ENCODE measurements at regions of chr15 and their contacts with region 1.

Region 1: GRCh38 chr15:75453703-75454470 is 2.4 kb upstream of the SIN3A start:
- DNase-seq: peak; percentile 95 to 100
- H3K4me3 ChIP-seq: peak overlapping the region; percentile 85 to 93 (median 92)
- H3K27ac ChIP-seq: peak overlapping the region; percentile 92
- H3K4me1 ChIP-seq: peaks cover 0 to 8% (median 3%) of the 10 kb centered on the region in 4 experiments; a peak in 2 of 7 replicates
- H3K27me3 ChIP-seq: no peaks in the 10 kb centered on the region
- CTCF ChIP-seq: no peak
- EP300 ChIP-seq: peak in 1 of 2 experiments; percentile 30; a peak in 2 of 3 replicates
- POLR2A ChIP-seq: peak; percentile 45 to 57; a peak in 2 of 3 replicates
- RAD21 ChIP-seq: no peak

Region 2: DNA sequence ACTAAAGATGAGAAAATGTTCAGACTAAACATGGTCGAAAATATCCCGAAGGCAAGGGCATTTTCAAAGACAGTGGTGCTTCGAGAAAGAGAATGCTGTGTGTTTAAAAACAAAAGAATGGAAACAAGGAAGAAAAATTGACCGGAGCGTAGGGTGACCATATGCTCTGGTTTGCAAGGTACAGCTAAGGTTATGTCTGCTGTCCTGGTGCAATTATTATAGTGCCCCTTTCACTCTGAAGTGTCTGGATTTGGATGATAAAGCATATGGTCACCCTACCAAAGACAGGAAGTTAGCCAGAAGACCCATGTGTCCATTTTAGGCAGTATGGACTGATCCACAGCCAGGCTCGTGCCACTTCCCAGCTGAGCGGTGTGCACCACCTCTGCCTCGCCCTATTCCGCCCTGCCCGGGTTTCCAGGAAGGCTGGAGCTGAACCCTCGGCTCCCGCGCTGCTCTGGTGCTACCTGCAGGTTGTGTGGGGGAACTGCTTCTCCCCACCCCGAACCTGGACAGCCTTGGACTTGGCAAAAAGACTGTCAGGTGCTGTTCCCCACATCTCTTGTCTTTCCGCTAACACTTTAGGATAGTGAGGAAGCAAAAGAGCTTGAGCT is 146.0 kb before region 1 on chr15:
- CTCF ChIA-PET with region 1: no interaction called
- POLR2A ChIA-PET with region 1: no interaction called
- DNase-seq: peak; percentile 60 to 88
- H3K4me3 ChIP-seq: no peak overlapping the region
- H3K27ac ChIP-seq: no peak overlapping the region
- H3K4me1 ChIP-seq: no peaks in the 10 kb centered on the region
- H3K27me3 ChIP-seq: no peaks in the 10 kb centered on the region
- CTCF ChIP-seq: peak; percentile 94 to 95 (median 95)
- EP300 ChIP-seq: no peak
- POLR2A ChIP-seq: no peak
- RAD21 ChIP-seq: peak; percentile 98 to 99

Region 3: GRCh38 chr15:75327005-75327404 is 126.9 kb before region 1 on chr15:
- CTCF ChIA-PET with region 1: no interaction called
- POLR2A ChIA-PET with region 1: no interaction called
- DNase-seq: no peak
- H3K4me3 ChIP-seq: no peak overlapping the region
- H3K27ac ChIP-seq: no peak overlapping the region
- H3K4me1 ChIP-seq: no peaks in the 10 kb centered on the region
- H3K27me3 ChIP-seq: no peaks in the 10 kb centered on the region
- CTCF ChIP-seq: peak; percentile 25 to 47 (median 27); a peak in 2 of 4 replicates
- EP300 ChIP-seq: no peak
- POLR2A ChIP-seq: no peak
- RAD21 ChIP-seq: no peak

Region 4: GRCh38 chr15:75356021-75356461 is 97.8 kb before region 1 on chr15:
- CTCF ChIA-PET with region 1: no interaction called
- POLR2A ChIA-PET with region 1: no interaction called
- DNase-seq: no peak
- H3K4me3 ChIP-seq: no peak overlapping the region
- H3K27ac ChIP-seq: no peak overlapping the region
- H3K4me1 ChIP-seq: no peaks in the 10 kb centered on the region
- H3K27me3 ChIP-seq: no peaks in the 10 kb centered on the region
- CTCF ChIP-seq: no peak
- EP300 ChIP-seq: no peak
- POLR2A ChIP-seq: no peak
- RAD21 ChIP-seq: no peak

Region 5: DNA sequence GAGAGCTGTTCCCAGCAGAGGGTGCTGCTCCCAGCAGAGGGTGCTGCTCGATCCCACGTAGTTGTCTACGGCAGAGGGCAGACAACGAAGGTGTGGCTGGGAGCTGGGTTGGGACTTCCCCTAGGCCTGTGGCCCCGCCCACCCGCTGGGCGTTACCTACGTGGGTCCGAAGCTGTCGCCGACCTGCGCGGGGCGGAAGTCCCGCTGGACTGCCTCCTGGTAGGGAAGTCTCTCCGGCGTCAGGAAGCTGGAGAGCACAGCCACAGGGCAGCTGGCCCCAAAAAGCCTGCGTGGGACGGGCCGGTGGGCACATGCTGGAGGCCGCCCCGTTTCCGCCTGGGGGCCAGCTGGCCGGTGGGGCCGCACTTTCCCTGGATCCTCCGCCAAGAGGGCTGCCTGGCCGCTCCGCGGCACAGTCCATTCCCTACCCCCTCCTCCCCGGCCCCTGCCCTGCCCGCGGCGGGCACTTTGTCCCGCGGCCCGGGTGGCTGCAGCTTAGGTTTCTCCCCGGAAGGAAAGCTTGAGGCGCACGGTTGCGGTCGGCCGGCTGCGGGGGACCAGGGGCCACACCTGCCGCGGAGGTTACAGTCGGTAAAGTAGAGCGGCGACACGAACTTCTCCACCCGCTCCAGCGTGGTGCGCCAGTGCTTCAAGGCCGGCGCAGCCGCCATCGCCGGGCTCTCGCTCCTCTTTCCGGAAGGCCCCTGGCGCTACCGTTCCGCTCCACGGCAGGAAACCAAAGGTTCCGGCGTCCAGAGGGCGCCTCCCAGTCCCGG is 85.8 kb before region 1 on chr15 and contains the start of gene MAN2C1:
- CTCF ChIA-PET with region 1: interaction called, 7 read pairs
- POLR2A ChIA-PET with region 1: interaction called, 26 read pairs
- DNase-seq: peak; percentile 94 to 96
- H3K4me3 ChIP-seq: peak within 1 kb of the TSS; percentile 59 to 85 (median 72)
- H3K27ac ChIP-seq: peak within 1 kb of the TSS; percentile 74
- H3K4me1 ChIP-seq: peaks cover 0 to 4% (median 1%) of the 10 kb centered on the region in 4 experiments; a peak in 4 of 7 replicates
- H3K27me3 ChIP-seq: no peaks in the 10 kb centered on the region
- CTCF ChIP-seq: peak; percentile 91 to 96 (median 93)
- EP300 ChIP-seq: peak; percentile 9 to 76; a peak in 2 of 3 replicates
- POLR2A ChIP-seq: peak; percentile 95 to 96
- RAD21 ChIP-seq: peak; percentile 52 to 65
- total RNA-seq, gene MAN2C1: 79.1 and 88.9 TPM in 2 replicates

Region 6: GRCh38 chr15:75468913-75469598 is 15.2 kb after region 1 on chr15:
- CTCF ChIA-PET with region 1: interaction called, 11 read pairs
- POLR2A ChIA-PET with region 1: interaction called, 61 read pairs
- DNase-seq: no peak
- H3K4me3 ChIP-seq: no peak overlapping the region
- H3K27ac ChIP-seq: no peak overlapping the region
- H3K4me1 ChIP-seq: no peaks in the 10 kb centered on the region
- H3K27me3 ChIP-seq: no peaks in the 10 kb centered on the region
- CTCF ChIP-seq: no peak
- EP300 ChIP-seq: no peak
- POLR2A ChIP-seq: no peak
- RAD21 ChIP-seq: no peak

Region 7: DNA sequence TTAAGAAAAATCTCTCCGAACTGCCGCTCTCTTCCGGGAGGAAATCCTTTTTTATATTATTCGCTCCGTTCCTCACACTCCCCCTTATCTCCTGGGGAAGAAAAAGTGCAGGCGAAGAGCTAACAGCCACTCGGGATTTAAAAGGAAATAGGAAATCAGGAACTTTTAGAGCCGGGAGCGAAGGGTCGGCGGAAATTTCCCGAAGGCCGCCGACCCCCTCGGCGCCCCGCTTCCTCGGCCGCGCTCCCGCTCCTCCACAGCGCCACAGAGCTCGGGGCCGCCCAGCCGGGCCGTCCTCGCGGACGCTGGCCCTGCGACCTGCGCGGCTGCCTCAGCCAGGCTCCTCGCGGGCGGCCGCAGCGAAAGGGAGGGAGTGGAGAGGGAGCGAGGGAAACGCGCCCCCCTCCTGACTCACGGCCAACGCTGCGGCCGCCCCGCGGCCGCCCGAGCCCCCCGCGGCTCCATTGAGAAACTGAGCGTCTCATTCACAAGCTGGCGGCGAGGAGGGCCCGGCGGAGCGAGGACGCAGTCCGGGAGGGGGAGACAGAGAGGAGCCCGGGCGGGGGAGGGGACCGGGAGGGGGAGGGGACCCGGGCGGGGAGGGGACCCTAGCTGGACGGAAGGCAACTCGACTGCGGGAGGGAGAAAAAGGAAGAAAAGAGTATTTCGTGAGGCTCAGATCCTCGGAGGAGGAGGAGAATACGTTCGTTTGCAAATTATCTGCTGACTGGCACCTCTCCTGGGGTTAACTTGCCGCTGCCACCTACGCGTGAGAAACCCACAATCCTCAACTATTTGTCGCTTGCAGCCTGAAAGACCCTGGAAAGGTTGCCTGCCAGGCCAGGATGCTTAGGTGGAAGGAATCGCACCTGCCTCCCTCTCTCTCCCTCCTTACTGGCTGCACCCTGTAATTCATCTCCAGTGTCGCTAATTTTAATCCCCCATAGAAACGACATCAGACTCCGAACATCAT is 125.3 kb after region 1 on chr15 and contains the start of gene PTPN9:
- CTCF ChIA-PET with region 1: interaction called, 3 read pairs
- POLR2A ChIA-PET with region 1: interaction called, 28 read pairs
- DNase-seq: peak; percentile 69 to 86
- H3K4me3 ChIP-seq: peak within 1 kb of the TSS; percentile 92 to 96 (median 94)
- H3K27ac ChIP-seq: peak within 1 kb of the TSS; percentile 76; the same call in 1 of the 2 replicates
- H3K4me1 ChIP-seq: peaks cover 2 to 6% (median 4%) of the 10 kb centered on the region in 4 experiments; a peak in 6 of 7 replicates
- H3K27me3 ChIP-seq: no peaks in the 10 kb centered on the region
- CTCF ChIP-seq: peak in 2 of 3 experiments; percentile 40 to 47; a peak in 3 of 4 replicates
- EP300 ChIP-seq: peak in 1 of 2 experiments; percentile 66; a peak in 1 of 3 replicates
- POLR2A ChIP-seq: peak; percentile 47 to 71
- RAD21 ChIP-seq: peak in 1 of 2 experiments; percentile 23; a peak in 1 of 4 replicates
- total RNA-seq, gene PTPN9: 44.5 and 46.6 TPM in 2 replicates

Region 8: GRCh38 chr15:75639709-75640482 is 186.0 kb after region 1 on chr15 and contains the start of gene IMP3:
- CTCF ChIA-PET with region 1: interaction called, 3 read pairs
- POLR2A ChIA-PET with region 1: interaction called, 12 read pairs
- DNase-seq: peak; percentile 89 to 92
- H3K4me3 ChIP-seq: peak within 1 kb of the TSS; percentile 82 to 99 (median 94)
- H3K27ac ChIP-seq: peak within 1 kb of the TSS; percentile 94
- H3K4me1 ChIP-seq: peaks cover 0 to 8% (median 6%) of the 10 kb centered on the region in 4 experiments; a peak in 5 of 7 replicates
- H3K27me3 ChIP-seq: no peaks in the 10 kb centered on the region
- CTCF ChIP-seq: no peak
- EP300 ChIP-seq: no peak
- POLR2A ChIP-seq: peak; percentile 92 to 97
- RAD21 ChIP-seq: no peak
- total RNA-seq, gene IMP3: 114 and 122 TPM in 2 replicates

Region 9: GRCh38 chr15:75647370-75648155 is 193.7 kb after region 1 on chr15 and contains the start of gene SNX33:
- CTCF ChIA-PET with region 1: interaction called, 3 read pairs
- POLR2A ChIA-PET with region 1: interaction called, 25 read pairs
- DNase-seq: peak; percentile 76 to 85
- H3K4me3 ChIP-seq: peak within 1 kb of the TSS; percentile 63 to 90 (median 72)
- H3K27ac ChIP-seq: peak within 1 kb of the TSS; percentile 82
- H3K4me1 ChIP-seq: peaks cover 9 to 29% (median 16%) of the 10 kb centered on the region in 4 experiments
- H3K27me3 ChIP-seq: peaks cover 0 to 14% (median 10%) of the 10 kb centered on the region in 4 experiments; a peak in 6 of 7 replicates
- CTCF ChIP-seq: peak; percentile 36 to 57 (median 44)
- EP300 ChIP-seq: no peak; a peak in 1 of 3 replicates
- POLR2A ChIP-seq: no peak; a peak in 1 of 3 replicates
- RAD21 ChIP-seq: peak; percentile 16 to 40; a peak in 3 of 4 replicates
- total RNA-seq, gene SNX33: 22.9 and 24.8 TPM in 2 replicates

Measured in H1 (cell line).